Panc1 (cell line): ENCODE measurements at regions of chr11 and their contacts with region 1.

Region 1: DNA sequence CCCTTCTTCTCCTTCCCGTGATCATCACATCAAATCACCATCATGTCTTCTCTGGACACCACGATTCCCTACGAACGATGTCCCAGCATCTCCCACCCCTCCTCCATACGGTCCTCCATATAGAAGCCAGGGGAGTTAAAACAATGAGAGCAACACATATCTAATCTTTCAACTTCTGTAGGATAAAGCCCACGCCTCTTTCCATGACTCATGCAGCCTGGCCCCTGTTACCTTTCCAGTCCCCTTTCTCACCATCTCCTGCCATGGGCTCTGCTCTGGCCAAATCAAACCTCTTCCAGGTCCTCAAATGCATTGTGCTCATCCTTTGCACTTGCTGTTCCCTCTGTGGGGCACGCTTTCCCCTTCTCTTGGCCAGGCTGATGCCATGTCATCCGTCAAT is 23.6 kb downstream of the RPS6KA4 start:
- DNase-seq: no peak
- ATAC-seq: no peak
- H3K4me3 ChIP-seq: no peak overlapping the region
- H3K27ac ChIP-seq: no peak overlapping the region
- H3K4me1 ChIP-seq: peaks cover 6% of the 10 kb centered on the region; the same call in 1 of the 2 replicates
- H3K27me3 ChIP-seq: no peaks in the 10 kb centered on the region
- CTCF ChIP-seq: no peak

Region 2: DNA sequence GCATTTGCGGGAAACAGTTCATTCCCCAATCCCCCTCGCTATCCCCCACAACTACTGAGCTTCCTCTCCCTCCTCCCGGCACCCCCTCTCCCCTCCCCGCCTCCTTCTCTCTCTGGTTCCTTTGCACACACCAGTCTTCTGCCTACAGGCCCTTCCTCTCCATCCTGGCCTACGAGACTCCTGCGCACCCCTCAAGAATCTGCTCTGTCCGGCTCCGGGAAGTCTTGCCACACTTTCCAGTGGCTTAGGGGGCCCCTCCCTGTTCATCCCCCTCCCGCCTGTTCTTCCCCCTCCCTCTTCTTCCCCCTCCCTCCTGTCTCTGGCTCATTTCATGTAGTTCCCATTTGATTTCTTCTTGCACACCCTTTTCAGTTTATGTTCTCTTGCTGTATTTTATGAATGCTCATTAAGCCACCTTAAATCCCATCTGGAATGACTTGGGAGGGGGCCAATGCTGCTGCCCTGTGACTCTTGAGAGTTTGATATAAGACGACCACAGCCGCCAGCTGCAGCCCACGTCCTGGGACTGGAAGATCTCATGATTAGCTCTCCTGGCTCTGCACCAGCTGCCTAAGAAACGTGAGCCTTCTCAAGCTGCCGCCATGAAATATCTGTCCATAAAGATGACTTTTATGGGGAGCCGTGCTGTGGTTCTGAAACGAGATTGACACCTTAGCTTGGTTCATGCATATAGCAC is 27.3 kb after region 1 on chr11:
- CTCF ChIA-PET with region 1: no interaction called
- POLR2A ChIA-PET with region 1: interaction called, 10 read pairs
- in situ Hi-C with region 1: no loop called
- intact Hi-C with region 1: no loop called
- DNase-seq: no peak
- ATAC-seq: no peak
- H3K4me3 ChIP-seq: no peak overlapping the region
- H3K27ac ChIP-seq: no peak overlapping the region
- H3K4me1 ChIP-seq: no peaks in the 10 kb centered on the region
- H3K27me3 ChIP-seq: no peaks in the 10 kb centered on the region
- CTCF ChIP-seq: no peak